ENCODE measurements at regions of chr17 and their contacts with region 1.

Region 1: DNA sequence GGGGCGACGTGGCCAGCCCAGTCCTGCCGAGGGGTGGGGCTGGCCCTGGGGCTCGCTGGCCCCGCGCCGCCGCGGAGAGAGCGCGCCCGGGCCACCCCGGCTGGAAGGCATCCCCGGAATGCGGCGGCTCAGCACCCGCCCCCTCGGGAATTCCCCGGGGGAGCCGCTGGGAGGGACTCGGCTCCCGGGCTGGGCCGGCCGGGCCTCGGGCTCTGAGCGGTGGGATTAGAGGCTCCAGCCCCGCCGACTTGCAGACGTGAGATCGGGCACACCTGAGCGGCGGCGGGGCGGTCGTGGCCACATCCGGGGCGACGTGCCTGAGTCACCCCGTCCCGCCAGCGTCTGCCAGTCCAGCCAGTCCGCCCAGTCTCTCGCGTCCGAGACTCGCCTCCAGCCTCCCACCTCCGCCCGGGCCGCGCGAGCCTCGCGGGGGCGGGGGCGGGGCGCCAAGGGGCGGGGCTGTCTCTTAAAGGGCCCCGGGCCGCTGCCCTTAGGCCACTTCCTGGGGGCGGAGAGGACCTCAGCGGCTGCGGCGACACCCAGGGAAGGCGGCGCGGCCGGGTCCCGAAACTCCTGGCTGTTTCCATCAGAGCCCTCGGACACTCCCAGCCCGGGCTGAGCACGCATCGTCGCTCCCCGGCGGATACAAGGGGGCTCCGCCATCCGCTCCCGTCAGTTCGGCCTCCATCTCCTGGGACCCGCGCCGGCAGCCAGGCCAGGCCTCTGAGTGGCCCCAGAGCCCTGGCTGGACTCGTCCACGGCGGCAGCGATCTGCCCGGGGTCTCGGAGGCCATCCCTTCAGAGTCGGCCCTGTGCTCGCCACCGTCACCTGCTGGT is at the start of gene KCTD11:
- DNase-seq: peak; percentile 76
- H3K4me3 ChIP-seq: peak within 1 kb of the TSS; percentile 54 to 78 (median 70)
- H3K27ac ChIP-seq: peak within 1 kb of the TSS; percentile 78
- H3K4me1 ChIP-seq: peaks cover 17% of the 10 kb centered on the region
- H3K27me3 ChIP-seq: no peaks in the 10 kb centered on the region
- CTCF ChIP-seq: peak in 1 of 2 donors; percentile 69
- POLR2A ChIP-seq: peak; percentile 57
- total RNA-seq, gene KCTD11: 3.5 and 3.8 TPM in 2 replicates

Region 2: GRCh38 chr17:6948562-6948961 is 403.3 kb before region 1 on chr17:
- CTCF ChIA-PET with region 1: no interaction called
- POLR2A ChIA-PET with region 1: no interaction called
- dilution Hi-C with region 1: no loop called
- intact Hi-C with region 1: no loop called
- DNase-seq: peak; percentile 33
- H3K4me3 ChIP-seq: no peak overlapping the region
- H3K27ac ChIP-seq: no peak overlapping the region
- H3K4me1 ChIP-seq: no peaks in the 10 kb centered on the region
- H3K27me3 ChIP-seq: no peaks in the 10 kb centered on the region
- CTCF ChIP-seq: no peak
- POLR2A ChIP-seq: no peak

Region 3: DNA sequence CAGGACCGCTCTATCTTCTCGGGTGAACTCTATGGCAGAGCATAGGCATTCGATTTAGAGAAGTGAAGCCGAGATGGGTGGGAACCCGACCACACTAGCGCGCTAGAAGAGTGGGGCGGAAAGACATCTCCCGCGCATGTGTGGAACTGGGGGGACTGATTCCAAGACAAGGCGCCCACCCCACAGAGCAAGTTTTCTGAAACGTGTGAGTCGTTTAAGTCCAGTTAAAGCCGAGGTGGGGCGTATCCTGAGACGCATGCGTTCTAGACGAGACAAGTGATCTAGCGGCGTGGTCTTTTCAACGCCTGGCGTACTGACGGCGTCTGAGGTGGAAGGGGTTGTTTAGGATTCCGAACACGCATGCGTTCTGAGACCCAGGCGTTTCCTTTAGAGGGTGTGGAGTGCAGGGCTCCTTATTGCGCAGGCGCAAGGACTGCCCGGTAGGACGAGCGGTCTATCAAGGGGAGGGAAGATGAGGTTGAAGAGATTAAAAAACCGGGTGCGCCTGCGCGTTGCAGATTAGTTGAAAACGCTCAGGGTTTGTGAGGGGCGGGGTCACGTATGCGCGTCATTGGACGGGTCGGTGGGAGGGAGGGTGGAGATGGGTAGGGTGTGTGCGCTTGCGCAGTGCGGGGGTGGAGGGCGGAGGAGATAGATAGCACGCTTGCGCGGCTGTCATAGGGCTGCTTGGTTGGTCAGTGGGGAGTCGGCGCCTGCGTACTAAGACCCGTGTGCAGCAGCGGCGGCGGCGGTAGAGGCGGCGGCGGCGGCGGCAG is 44.8 kb before region 1 on chr17 and contains the start of gene EIF5A:
- CTCF ChIA-PET with region 1: no interaction called
- POLR2A ChIA-PET with region 1: no interaction called
- dilution Hi-C with region 1: no loop called
- intact Hi-C with region 1: no loop called
- DNase-seq: peak; percentile 100
- H3K4me3 ChIP-seq: peak within 1 kb of the TSS; percentile 71 to 93 (median 87)
- H3K27ac ChIP-seq: peak within 1 kb of the TSS; percentile 83
- H3K4me1 ChIP-seq: peaks cover 12% of the 10 kb centered on the region
- H3K27me3 ChIP-seq: no peaks in the 10 kb centered on the region
- CTCF ChIP-seq: no peak
- POLR2A ChIP-seq: peak; percentile 83
- total RNA-seq, gene EIF5A: 847 and 859 TPM in 2 replicates

Region 4: DNA sequence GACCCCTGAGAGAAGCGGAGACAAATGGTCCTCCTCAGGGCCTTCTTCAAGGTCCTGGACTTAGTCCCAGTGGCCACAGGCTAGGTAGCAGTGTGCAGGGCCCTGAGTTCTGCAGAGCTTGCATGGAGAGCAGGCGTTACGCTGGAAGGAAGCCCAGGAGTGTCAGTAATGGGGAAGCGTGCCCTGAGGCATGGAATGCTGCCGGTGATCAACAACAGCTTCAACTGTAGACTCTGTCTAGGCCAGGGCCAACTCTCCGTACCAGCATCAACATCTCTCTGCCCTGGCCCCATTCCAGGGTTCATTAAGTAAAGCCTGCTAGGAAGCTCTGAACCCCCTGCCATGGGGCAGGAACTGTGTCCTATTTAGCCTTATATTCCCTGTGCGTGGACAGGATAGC is 28.4 kb after region 1 on chr17:
- CTCF ChIA-PET with region 1: interaction called, 14 read pairs
- POLR2A ChIA-PET with region 1: no interaction called
- dilution Hi-C with region 1: no loop called
- intact Hi-C with region 1: no loop called
- DNase-seq: no peak
- H3K4me3 ChIP-seq: no peak overlapping the region
- H3K27ac ChIP-seq: no peak overlapping the region
- H3K4me1 ChIP-seq: peaks cover 5% of the 10 kb centered on the region
- H3K27me3 ChIP-seq: peaks cover 25 to 33% of the 10 kb centered on the region in 2 experiments
- CTCF ChIP-seq: no peak
- POLR2A ChIP-seq: no peak

Region 5: GRCh38 chr17:7403977-7404736 is 52.3 kb after region 1 on chr17 and contains the start of gene TMEM256:
- CTCF ChIA-PET with region 1: interaction called, 21 read pairs
- POLR2A ChIA-PET with region 1: no interaction called
- dilution Hi-C with region 1: no loop called
- intact Hi-C with region 1: no loop called
- DNase-seq: peak; percentile 99
- H3K4me3 ChIP-seq: peak within 1 kb of the TSS; percentile 43 to 61 (median 52)
- H3K27ac ChIP-seq: peak within 1 kb of the TSS; percentile 21
- H3K4me1 ChIP-seq: peaks cover 12% of the 10 kb centered on the region
- H3K27me3 ChIP-seq: no peaks in the 10 kb centered on the region
- CTCF ChIP-seq: peak in 1 of 2 donors; percentile 2
- POLR2A ChIP-seq: peak; percentile 93
- total RNA-seq, gene TMEM256: 57.3 and 67.4 TPM in 2 replicates

Region 6: GRCh38 chr17:7502987-7503386 is 151.1 kb after region 1 on chr17:
- CTCF ChIA-PET with region 1: interaction called, 12 read pairs
- POLR2A ChIA-PET with region 1: no interaction called
- dilution Hi-C with region 1: no loop called
- intact Hi-C with region 1: no loop called
- DNase-seq: no peak
- H3K4me3 ChIP-seq: no peak overlapping the region
- H3K27ac ChIP-seq: no peak overlapping the region
- H3K4me1 ChIP-seq: peaks cover under 1% of the 10 kb centered on the region
- H3K27me3 ChIP-seq: no peaks in the 10 kb centered on the region
- CTCF ChIP-seq: peak; percentile 18 to 27
- POLR2A ChIP-seq: no peak

Measured in endothelial cell of umbilical vein (primary cell).